IMR-90 (cell line): ENCODE measurements at regions of chr3 and their contacts with region 1.

Region 1: DNA sequence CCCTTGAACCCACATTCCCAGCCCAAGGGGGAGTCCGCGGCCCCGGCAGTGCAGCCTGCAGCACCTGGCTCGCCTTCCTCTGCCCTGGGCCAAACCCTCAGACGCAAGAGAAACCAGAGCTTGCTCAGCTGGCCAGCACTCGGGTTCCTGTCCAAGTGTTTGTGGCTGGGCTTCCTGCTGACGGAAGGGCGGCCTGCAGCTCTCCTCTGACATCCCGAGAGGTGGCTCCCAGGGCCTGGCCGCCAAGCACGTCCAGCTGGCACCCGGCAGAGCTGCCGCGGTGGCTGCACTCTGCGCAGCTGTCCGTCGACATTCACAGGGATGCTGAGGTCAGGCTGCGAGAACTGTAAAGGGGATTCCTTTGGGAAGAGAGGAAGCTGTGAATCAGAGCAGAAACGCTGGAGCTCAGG is 85.6 kb downstream of the CPN2 start:
- DNase-seq: peak; percentile 93
- ATAC-seq: peak; percentile 89
- H3K4me3 ChIP-seq: no peak overlapping the region
- H3K27ac ChIP-seq: no peak overlapping the region
- H3K4me1 ChIP-seq: peaks cover 2% of the 10 kb centered on the region; the same call in 1 of the 2 replicates
- H3K27me3 ChIP-seq: peaks cover 22% of the 10 kb centered on the region
- CTCF ChIP-seq: no peak
- POLR2A ChIP-seq: no peak
- RAD21 ChIP-seq: no peak

Region 2: DNA sequence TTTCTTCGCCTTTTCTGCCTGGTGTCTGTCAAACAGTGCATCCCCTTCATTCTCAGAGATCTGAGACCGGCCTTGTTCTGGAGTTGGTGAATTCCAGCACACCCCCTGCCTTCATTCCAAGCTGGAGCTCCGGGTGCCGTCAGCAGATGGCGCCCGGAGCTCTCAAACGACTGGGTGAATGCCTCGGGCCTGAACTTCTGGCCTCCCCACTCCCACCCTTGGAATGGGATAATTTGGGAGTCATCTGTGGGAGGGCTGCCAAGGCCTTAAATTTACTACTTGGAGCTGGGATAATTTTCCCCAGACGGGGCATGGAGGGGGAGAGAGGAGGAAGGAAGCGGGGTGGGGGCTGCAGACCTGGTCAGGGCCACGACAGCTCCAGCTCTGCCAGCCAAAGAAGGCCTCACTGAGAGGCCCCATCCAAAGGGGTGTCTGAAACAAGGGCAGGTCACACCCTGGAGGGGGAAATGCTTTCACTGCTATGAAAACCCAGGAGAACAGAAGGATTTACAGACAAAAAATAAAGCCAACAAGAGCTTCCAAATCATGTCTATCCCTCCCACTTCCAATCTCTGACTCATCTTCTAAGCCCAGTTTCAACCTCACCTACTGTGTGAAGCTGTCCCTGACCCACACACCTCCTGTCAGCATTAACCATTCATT is 484.5 kb before region 1 on chr3:
- CTCF ChIA-PET with region 1: no interaction called
- POLR2A ChIA-PET with region 1: no interaction called
- dilution Hi-C with region 1: no loop called
- in situ Hi-C with region 1: no loop called
- intact Hi-C with region 1: loop called (anchors 5 kb)
- DNase-seq: peak; percentile 54
- ATAC-seq: peak; percentile 92
- H3K4me3 ChIP-seq: no peak overlapping the region
- H3K27ac ChIP-seq: no peak overlapping the region
- H3K4me1 ChIP-seq: no peaks in the 10 kb centered on the region
- H3K27me3 ChIP-seq: peaks cover 50% of the 10 kb centered on the region
- CTCF ChIP-seq: peak; percentile 81
- POLR2A ChIP-seq: no peak
- RAD21 ChIP-seq: peak; percentile 86

Region 3: DNA sequence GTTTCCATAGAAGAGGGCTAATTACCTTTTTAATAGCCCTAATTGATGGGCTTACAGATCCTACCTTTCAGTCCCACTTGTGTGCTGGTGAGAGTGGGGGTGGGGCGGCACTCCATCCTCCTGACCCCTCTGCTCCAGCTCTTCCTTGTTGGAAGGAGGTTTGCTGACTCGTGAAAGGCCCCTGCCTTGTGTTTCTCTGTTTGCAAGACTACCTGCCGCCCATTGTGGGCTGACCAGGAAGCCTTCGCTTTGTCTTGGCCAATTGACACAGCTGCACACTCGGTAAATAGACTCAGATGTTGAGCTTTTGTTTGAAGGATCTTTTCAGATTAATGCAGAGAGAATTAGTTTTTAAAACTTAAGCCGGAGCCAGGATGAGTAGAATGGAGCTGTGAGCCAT is 326.9 kb before region 1 on chr3:
- CTCF ChIA-PET with region 1: no interaction called
- POLR2A ChIA-PET with region 1: no interaction called
- dilution Hi-C with region 1: no loop called
- in situ Hi-C with region 1: no loop called
- intact Hi-C with region 1: no loop called
- DNase-seq: no peak
- ATAC-seq: no peak
- H3K4me3 ChIP-seq: no peak overlapping the region
- H3K27ac ChIP-seq: no peak overlapping the region
- H3K4me1 ChIP-seq: no peaks in the 10 kb centered on the region
- H3K27me3 ChIP-seq: peaks cover 21% of the 10 kb centered on the region
- CTCF ChIP-seq: no peak
- POLR2A ChIP-seq: no peak
- RAD21 ChIP-seq: no peak

Region 4: GRCh38 chr3:194255252-194256039 is 10.0 kb before region 1 on chr3:
- CTCF ChIA-PET with region 1: no interaction called
- POLR2A ChIA-PET with region 1: no interaction called
- dilution Hi-C with region 1: no loop called
- in situ Hi-C with region 1: no loop called
- intact Hi-C with region 1: no loop called
- DNase-seq: no peak
- ATAC-seq: no peak
- H3K4me3 ChIP-seq: no peak overlapping the region
- H3K27ac ChIP-seq: no peak overlapping the region
- H3K4me1 ChIP-seq: peaks cover 3% of the 10 kb centered on the region; the same call in 1 of the 2 replicates
- H3K27me3 ChIP-seq: peaks cover 46% of the 10 kb centered on the region
- CTCF ChIP-seq: no peak
- POLR2A ChIP-seq: no peak
- RAD21 ChIP-seq: no peak

Region 5: GRCh38 chr3:194285024-194285849 is 19.7 kb after region 1 on chr3:
- CTCF ChIA-PET with region 1: no interaction called
- POLR2A ChIA-PET with region 1: no interaction called
- dilution Hi-C with region 1: no loop called
- in situ Hi-C with region 1: no loop called
- intact Hi-C with region 1: no loop called
- DNase-seq: peak; percentile 64
- ATAC-seq: no peak
- H3K4me3 ChIP-seq: no peak overlapping the region
- H3K27ac ChIP-seq: no peak overlapping the region
- H3K4me1 ChIP-seq: no peaks in the 10 kb centered on the region
- H3K27me3 ChIP-seq: peaks cover 53% of the 10 kb centered on the region
- CTCF ChIP-seq: no peak
- POLR2A ChIP-seq: no peak
- RAD21 ChIP-seq: no peak

Region 6: GRCh38 chr3:194333212-194333980 is 67.9 kb after region 1 on chr3:
- CTCF ChIA-PET with region 1: no interaction called
- POLR2A ChIA-PET with region 1: no interaction called
- dilution Hi-C with region 1: no loop called
- in situ Hi-C with region 1: no loop called
- intact Hi-C with region 1: no loop called
- DNase-seq: peak; percentile 80
- ATAC-seq: peak; percentile 90
- H3K4me3 ChIP-seq: peak overlapping the region; percentile 53
- H3K27ac ChIP-seq: no peak overlapping the region
- H3K4me1 ChIP-seq: peaks cover 12% of the 10 kb centered on the region
- H3K27me3 ChIP-seq: no peaks in the 10 kb centered on the region; the same call in 1 of the 2 replicates
- CTCF ChIP-seq: peak; percentile 97
- POLR2A ChIP-seq: 0 out of 2 replicates have a peak, but pooled peaks have one; percentile 38
- RAD21 ChIP-seq: peak; percentile 100